Pancreas (tissue), 10 donors: ENCODE measurements at regions of chr17 and their contacts with region 1.

Region 1: GRCh38 chr17:61635913-61636432 is 45.0 kb upstream of the NACA2 start:
- DNase-seq: peak in 4 of 6 donors; percentile 8 to 33 (median 14)
- ATAC-seq: peak in 2 of 4 donors; percentile 60 to 65
- H3K4me3 ChIP-seq: no peak overlapping the region
- H3K27ac ChIP-seq: no peak overlapping the region
- H3K4me1 ChIP-seq: no peaks in the 10 kb centered on the region
- H3K27me3 ChIP-seq: peaks cover 0 to 3% (median 0%) of the 10 kb centered on the region in 4 donors
- CTCF ChIP-seq: peak; percentile 7 to 46 (median 42)

Region 2: DNA sequence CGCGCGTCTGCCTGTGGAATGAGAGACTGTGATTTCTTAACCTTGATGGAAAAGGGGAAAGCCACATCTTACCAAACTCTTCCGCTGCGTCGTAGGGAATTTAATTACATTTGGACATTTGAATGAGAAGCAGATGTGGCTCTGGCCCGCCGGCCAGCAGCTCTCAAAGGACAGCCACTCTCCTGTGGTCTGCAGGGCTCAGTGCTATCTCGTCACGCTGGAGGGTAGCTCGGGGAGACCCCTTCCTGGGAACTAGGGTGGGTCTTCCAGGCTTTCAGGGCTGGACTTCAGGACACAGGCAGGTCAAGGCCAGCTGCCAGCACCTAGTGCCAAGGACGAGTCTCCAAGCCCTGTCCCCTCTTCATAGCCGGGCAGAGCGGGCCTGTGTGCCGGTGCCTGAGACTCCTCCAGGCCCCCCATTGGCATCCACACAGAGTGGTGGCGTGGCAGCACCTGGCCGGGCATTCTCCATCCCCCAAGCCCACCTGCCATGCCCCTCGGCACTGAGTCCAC is 252.2 kb before region 1 on chr17:
- intact Hi-C with region 1: no loop called
- DNase-seq: peak in 1 of 6 donors; percentile 43
- ATAC-seq: peak in 2 of 4 donors; percentile 15 to 24
- H3K4me3 ChIP-seq: no peak overlapping the region
- H3K27ac ChIP-seq: no peak overlapping the region
- H3K4me1 ChIP-seq: no peaks in the 10 kb centered on the region
- H3K27me3 ChIP-seq: no peaks in the 10 kb centered on the region
- CTCF ChIP-seq: no peak

Region 3: GRCh38 chr17:61659437-61659836 is 23.5 kb after region 1 on chr17:
- intact Hi-C with region 1: no loop called
- DNase-seq: no peak
- ATAC-seq: no peak
- H3K4me3 ChIP-seq: no peak overlapping the region
- H3K27ac ChIP-seq: no peak overlapping the region
- H3K4me1 ChIP-seq: no peaks in the 10 kb centered on the region
- H3K27me3 ChIP-seq: no peaks in the 10 kb centered on the region
- CTCF ChIP-seq: no peak

Region 4: DNA sequence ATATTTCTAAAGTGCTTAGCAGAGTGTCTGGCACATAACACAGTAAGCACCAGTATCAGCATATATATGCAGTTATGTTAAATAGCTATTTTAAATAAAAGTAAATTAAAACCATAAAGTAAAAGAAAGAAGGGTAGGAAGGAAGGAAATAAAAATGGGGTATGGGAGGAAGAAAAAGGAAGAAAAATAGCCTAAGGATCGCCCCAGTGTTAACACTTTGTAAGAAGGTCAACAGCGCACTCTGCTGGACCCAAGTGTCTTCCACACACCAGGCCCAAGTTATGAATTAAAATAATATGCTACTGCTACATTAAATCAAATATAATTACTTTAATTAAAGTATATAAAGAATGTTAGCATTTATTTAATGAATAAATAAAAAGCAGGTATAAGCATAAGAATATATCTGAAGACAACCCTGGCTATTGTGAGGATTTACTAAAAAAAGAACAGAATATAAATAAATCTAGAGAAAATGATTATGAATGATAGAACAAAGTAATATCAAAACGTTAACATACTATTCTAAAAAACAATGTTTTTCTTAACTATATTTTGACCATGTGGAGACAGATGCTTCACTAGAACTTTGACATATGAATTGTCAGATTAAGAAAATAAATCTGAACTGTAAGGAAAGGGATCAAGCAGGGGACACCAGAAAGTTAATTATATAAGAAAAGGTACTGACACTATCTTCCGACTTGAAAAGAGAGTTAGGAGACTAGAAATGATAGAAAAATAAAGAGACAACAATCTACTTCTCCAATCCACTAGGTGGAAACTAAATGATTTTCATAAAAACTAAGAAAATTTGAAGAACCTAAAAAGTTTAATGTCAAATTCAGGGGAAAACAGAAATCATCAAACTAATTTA is 201.4 kb after region 1 on chr17:
- intact Hi-C with region 1: loop called in 1 of 3 experiments (anchors 10 kb)
- DNase-seq: peak in 5 of 6 donors; percentile 16 to 64 (median 44)
- ATAC-seq: peak; percentile 67 to 84 (median 80)
- H3K4me3 ChIP-seq: no peak overlapping the region
- H3K27ac ChIP-seq: no peak overlapping the region
- H3K4me1 ChIP-seq: no peaks in the 10 kb centered on the region
- H3K27me3 ChIP-seq: no peaks in the 10 kb centered on the region
- CTCF ChIP-seq: peak; percentile 28 to 56 (median 52)